ENCODE measurements at regions of chr4 and their contacts with region 1.

Region 1: DNA sequence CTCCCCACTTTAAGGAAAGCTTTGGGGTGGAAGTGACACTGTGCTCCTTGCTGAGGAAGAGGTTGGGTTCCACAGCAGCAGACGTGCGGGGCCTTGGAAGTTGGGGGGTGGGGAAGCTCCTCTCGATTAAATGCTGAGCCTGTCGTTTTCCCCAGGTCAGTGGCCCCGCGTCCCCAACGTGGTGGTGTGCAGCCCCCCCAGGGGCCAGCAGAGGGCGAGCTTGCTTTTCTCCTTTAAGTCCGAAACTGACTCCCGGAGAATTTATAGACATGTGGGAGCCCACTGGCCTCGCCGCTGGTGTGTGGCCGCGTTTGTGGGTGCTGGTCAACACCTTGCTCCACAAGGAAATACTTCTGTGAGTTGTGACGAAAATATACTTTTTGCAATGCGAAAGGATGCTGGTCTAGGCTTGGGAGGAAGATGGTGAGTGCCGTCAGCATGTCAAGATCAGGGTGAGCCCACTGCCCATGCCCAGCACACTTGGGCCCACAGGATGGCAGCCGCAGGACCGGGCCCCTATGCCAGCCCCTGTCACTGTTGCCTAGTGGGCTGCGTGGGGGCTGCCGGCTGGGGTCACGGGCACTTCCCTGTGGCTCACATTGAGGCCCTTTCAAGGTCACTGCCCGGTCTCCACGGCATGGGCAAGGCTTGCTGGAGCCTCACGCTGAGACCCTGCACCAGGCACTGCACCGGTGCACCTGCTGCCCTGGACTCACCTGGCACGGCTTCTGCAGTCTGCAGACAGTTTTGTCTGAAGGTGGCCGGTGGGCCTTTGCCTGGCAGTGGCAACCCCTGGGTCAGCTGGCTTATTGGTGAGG is 9.4 kb downstream of the UVSSA start:
- DNase-seq: peak; percentile 84
- ATAC-seq: peak; percentile 29
- H3K4me3 Mint-ChIP-seq: no peak overlapping the region
- H3K27ac Mint-ChIP-seq: no peak overlapping the region
- H3K4me1 Mint-ChIP-seq: peaks cover 3% of the 10 kb centered on the region
- H3K27me3 Mint-ChIP-seq: no peaks in the 10 kb centered on the region
- CTCF ChIP-seq: peak; percentile 78

Region 2: DNA sequence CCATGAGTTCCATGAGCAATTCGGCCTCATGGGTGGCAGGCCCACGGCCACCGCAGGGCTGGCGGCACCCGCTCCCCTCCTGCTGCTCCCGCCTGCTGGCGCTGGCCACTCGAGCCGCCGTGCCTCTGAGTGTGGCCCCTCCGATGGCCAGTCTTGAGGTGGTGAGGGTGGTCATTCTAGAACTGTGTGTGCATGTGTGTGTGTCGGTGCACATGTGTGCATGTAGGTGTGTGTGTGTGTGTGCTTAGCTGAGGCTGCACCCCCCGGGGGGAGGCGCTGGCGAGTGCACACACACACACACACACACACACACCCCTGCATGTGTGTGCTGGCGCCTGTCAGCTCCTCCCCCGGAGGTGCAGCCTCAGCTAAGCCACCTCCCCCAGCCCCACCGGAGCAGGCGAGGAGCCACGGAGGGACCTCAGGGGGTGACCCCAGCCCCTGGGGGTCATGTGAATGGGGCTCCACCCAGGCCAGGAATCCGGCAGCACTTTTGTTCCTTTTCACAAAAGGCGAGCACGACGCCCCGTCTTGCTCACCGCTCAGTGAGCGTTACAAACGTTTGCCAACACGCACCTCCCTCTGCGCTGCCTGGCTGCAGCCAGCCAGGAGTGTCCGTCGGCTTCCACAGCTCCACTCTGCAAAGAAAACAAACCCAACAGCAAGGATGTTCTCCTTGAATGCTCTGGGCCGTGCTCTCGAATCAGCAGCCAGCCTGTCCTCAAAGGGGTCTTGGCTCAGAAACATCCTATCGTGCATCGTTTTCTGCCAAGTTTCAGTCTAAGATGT is 315.0 kb before region 1 on chr4:
- CTCF ChIA-PET with region 1: no interaction called
- POLR2A ChIA-PET with region 1: no interaction called
- DNase-seq: no peak
- ATAC-seq: no peak
- H3K4me3 Mint-ChIP-seq: no peak overlapping the region
- H3K27ac Mint-ChIP-seq: no peak overlapping the region; the same call in 1 of the 2 replicates
- H3K4me1 Mint-ChIP-seq: 0 out of 2 replicates have a peak, but pooled peaks cover 3% of the 10 kb centered on the region
- H3K27me3 Mint-ChIP-seq: no peaks in the 10 kb centered on the region; the same call in 1 of the 2 replicates
- CTCF ChIP-seq: no peak

Region 3: GRCh38 chr4:1402516-1403091 is 46.2 kb after region 1 on chr4:
- CTCF ChIA-PET with region 1: interaction called, 15 read pairs
- POLR2A ChIA-PET with region 1: no interaction called
- DNase-seq: no peak
- ATAC-seq: no peak
- H3K4me3 Mint-ChIP-seq: peak overlapping the region; percentile 22; the same call in 1 of the 2 replicates
- H3K27ac Mint-ChIP-seq: no peak overlapping the region
- H3K4me1 Mint-ChIP-seq: peaks cover 6% of the 10 kb centered on the region
- H3K27me3 Mint-ChIP-seq: peaks cover 73% of the 10 kb centered on the region
- CTCF ChIP-seq: no peak